Dendritic cell treated with granulocyte-macrophage colony-stimulating factor and Interleukin-4, amounts not matched to agents 40 ng/mL and 50 ng/mL, for 4 days (primary cell): ENCODE measurements at regions of chr7 and their contacts with region 1.

Region 1: GRCh38 chr7:17185690-17186070 is 112.8 kb upstream of the AHR start:
- H3K4me3 Mint-ChIP-seq: no peak overlapping the region
- H3K27ac Mint-ChIP-seq: peak overlapping the region; percentile 64
- H3K4me1 Mint-ChIP-seq: peaks cover 27% of the 10 kb centered on the region
- H3K27me3 Mint-ChIP-seq: no peaks in the 10 kb centered on the region

Region 2: DNA sequence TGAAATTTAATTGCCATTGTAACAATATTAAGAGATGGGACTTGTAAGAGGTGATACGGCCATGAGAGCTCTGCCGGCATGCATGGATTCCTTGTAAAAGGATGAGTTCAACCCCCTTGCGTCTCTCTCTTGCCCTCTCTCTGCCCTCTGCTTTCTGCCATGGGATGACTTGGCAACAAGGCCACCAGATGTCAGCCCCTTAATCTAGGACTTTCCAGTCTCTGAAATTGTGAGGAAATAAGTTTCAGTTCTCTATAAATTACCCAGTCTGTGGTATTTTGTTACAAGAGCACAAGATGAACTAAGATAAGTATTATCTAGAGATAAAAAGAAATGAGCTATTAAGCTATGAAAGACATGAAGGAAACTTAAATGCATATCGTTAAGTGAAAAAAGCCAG is 33.0 kb before region 1 on chr7:
- intact Hi-C with region 1: loop called (anchors 5 kb)
- H3K4me3 Mint-ChIP-seq: peak overlapping the region; percentile 50
- H3K27ac Mint-ChIP-seq: peak overlapping the region; percentile 89
- H3K4me1 Mint-ChIP-seq: peaks cover 56% of the 10 kb centered on the region
- H3K27me3 Mint-ChIP-seq: no peaks in the 10 kb centered on the region